ENCODE measurements at regions of chr14 and their contacts with region 1.

Region 1: GRCh38 chr14:50321009-50321660 is 9.0 kb downstream of the DMAC2L start:
- DNase-seq: peak; percentile 82
- ATAC-seq: peak; percentile 91
- H3K4me3 ChIP-seq: peak overlapping the region; percentile 47; the same call in 1 of the 2 replicates
- H3K27ac ChIP-seq: peak overlapping the region; percentile 77
- H3K4me1 ChIP-seq: peaks cover 27% of the 10 kb centered on the region
- H3K27me3 ChIP-seq: no peaks in the 10 kb centered on the region
- CTCF ChIP-seq: peak; percentile 86 to 97 (median 89)
- EP300 ChIP-seq: peak in 1 of 2 experiments; percentile 52; a peak in 1 of 4 replicates
- POLR2A ChIP-seq: no peak
- RAD21 ChIP-seq: peak; percentile 54

Region 2: DNA sequence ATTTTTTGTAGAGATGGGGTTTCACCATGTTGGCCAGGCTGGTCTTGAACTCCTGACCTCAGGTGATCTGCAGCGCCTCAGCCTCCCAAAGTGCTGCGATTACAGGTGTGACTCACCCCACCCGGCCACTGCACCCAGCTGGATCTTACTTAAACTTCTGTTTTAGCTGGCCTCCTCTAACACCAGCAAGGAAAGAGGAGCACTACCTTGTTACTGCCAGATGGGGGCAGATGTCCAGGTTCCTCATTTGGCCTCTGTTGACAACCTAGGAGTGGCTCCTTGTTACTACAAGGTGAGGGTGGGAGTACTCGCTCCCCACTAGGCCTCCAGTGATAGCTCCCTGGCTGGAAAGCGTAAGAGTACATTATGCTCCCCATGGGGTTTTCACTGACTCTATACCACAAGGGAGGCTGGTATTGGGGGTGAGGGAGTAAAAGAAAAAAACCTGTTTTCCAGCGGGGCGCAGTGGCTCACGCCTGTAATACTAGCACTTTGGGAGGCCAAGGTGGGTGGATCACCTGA is 441.4 kb before region 1 on chr14:
- CTCF ChIA-PET with region 1: no interaction called
- POLR2A ChIA-PET with region 1: no interaction called
- RAD21 ChIA-PET with region 1: no interaction called
- SMC1A ChIA-PET with region 1: no interaction called
- in situ Hi-C with region 1: no loop called
- intact Hi-C with region 1: no loop called
- DNase-seq: no peak
- ATAC-seq: peak; percentile 98
- H3K4me3 ChIP-seq: no peak overlapping the region
- H3K27ac ChIP-seq: no peak overlapping the region
- H3K4me1 ChIP-seq: no peaks in the 10 kb centered on the region
- H3K27me3 ChIP-seq: no peaks in the 10 kb centered on the region
- CTCF ChIP-seq: peak; percentile 50 to 74 (median 72)
- EP300 ChIP-seq: no peak
- POLR2A ChIP-seq: no peak
- RAD21 ChIP-seq: peak; percentile 72

Region 3: DNA sequence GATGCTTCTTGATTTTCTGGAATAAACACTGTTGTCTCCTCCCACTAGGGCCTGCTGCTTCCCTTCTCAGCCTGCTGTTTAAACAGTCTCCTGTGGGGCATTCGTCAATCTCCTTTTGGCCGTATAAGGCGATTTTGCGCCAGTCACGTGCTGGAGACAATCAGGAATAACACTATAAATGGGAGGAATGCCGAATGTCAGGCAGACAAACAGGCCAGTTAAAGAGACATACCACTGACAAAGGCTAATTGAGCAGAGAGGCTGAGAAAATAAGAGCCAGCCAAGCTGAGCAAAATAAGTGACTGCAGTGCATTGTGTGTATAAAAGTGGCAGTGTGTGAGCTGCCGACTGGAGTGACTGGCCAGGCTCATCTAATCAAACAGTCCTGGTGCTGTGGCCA is 14.3 kb after region 1 on chr14:
- CTCF ChIA-PET with region 1: interaction called, 30 read pairs
- POLR2A ChIA-PET with region 1: no interaction called
- RAD21 ChIA-PET with region 1: interaction called, 4 read pairs
- SMC1A ChIA-PET with region 1: interaction called, 8 read pairs
- in situ Hi-C with region 1: no loop called
- intact Hi-C with region 1: no loop called
- DNase-seq: no peak
- ATAC-seq: no peak; the same call in 2 of the 3 replicates
- H3K4me3 ChIP-seq: no peak overlapping the region
- H3K27ac ChIP-seq: no peak overlapping the region
- H3K4me1 ChIP-seq: peaks cover 5% of the 10 kb centered on the region
- H3K27me3 ChIP-seq: no peaks in the 10 kb centered on the region
- CTCF ChIP-seq: no peak
- EP300 ChIP-seq: no peak
- POLR2A ChIP-seq: no peak
- RAD21 ChIP-seq: no peak

Region 4: GRCh38 chr14:50354527-50354926 is 33.4 kb after region 1 on chr14:
- CTCF ChIA-PET with region 1: interaction called, 6 read pairs
- POLR2A ChIA-PET with region 1: no interaction called
- RAD21 ChIA-PET with region 1: no interaction called
- SMC1A ChIA-PET with region 1: interaction called, 10 read pairs
- in situ Hi-C with region 1: no loop called
- intact Hi-C with region 1: no loop called
- DNase-seq: no peak
- ATAC-seq: no peak
- H3K4me3 ChIP-seq: no peak overlapping the region
- H3K27ac ChIP-seq: no peak overlapping the region
- H3K4me1 ChIP-seq: no peaks in the 10 kb centered on the region
- H3K27me3 ChIP-seq: no peaks in the 10 kb centered on the region
- CTCF ChIP-seq: no peak
- EP300 ChIP-seq: no peak
- POLR2A ChIP-seq: no peak
- RAD21 ChIP-seq: no peak

Region 5: GRCh38 chr14:50396631-50397390 is 75.7 kb after region 1 on chr14 and contains the start of gene CDKL1:
- CTCF ChIA-PET with region 1: interaction called, 9 read pairs
- POLR2A ChIA-PET with region 1: no interaction called
- RAD21 ChIA-PET with region 1: interaction called, 8 read pairs
- SMC1A ChIA-PET with region 1: interaction called, 9 read pairs
- in situ Hi-C with region 1: no loop called
- intact Hi-C with region 1: loop called (anchors 2 kb)
- DNase-seq: no peak
- ATAC-seq: peak; percentile 83
- H3K4me3 ChIP-seq: peak within 1 kb of the TSS; percentile 66
- H3K27ac ChIP-seq: peak within 1 kb of the TSS; percentile 59
- H3K4me1 ChIP-seq: peaks cover 7% of the 10 kb centered on the region
- H3K27me3 ChIP-seq: no peaks in the 10 kb centered on the region
- CTCF ChIP-seq: no peak
- EP300 ChIP-seq: no peak
- POLR2A ChIP-seq: peak; percentile 80
- RAD21 ChIP-seq: no peak
- polyA plus RNA-seq, gene CDKL1: 10.0 to 17.2 TPM

Region 6: DNA sequence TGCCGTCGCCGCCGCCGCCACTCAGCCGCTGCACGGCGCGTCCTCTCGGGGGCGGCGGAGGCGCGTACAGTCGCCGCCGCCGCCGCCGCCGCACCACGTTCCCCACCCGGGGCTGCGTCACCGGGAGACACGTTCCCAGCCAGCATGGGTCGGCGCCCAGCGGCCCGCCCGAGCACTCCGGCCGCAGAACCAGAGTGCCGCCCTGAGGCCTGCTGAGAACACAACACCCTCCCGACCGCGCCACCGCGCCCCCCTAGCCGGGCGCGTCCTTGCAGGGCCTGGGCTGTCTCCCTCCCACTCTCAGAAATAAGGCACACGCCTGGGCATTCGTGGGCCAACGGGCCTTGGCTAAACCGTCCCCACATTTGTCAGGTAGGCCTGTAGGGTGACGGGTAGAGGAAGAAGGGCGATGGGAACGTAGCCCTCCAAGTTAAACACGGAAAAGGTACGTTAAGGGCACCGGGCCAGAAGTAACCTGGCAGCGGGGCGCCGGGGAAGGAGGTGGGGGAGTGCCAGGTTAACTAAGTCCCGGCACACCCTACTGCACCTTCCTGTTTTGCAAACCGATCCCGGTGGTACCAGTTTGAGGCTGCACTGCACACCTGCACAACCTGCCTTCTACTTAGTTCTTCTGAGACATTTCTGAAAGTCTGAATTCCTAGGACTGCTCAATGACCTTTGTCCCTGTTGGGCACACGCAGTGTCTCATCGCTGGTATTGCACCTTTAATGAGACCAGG is 211.5 kb after region 1 on chr14 and contains the start of gene MAP4K5:
- CTCF ChIA-PET with region 1: interaction called, 19 read pairs
- POLR2A ChIA-PET with region 1: interaction called, 4 read pairs
- RAD21 ChIA-PET with region 1: interaction called, 10 read pairs
- SMC1A ChIA-PET with region 1: interaction called, 17 read pairs
- in situ Hi-C with region 1: loop called (anchors 5 kb)
- intact Hi-C with region 1: loop called (anchors 1 kb)
- DNase-seq: peak; percentile 40
- ATAC-seq: peak; percentile 91
- H3K4me3 ChIP-seq: peak within 1 kb of the TSS; percentile 81
- H3K27ac ChIP-seq: peak within 1 kb of the TSS; percentile 75
- H3K4me1 ChIP-seq: peaks cover 10% of the 10 kb centered on the region
- H3K27me3 ChIP-seq: no peaks in the 10 kb centered on the region
- CTCF ChIP-seq: peak; percentile 89 to 99 (median 92); a peak in 5 of 6 replicates
- EP300 ChIP-seq: 0 out of 4 replicates have a peak, but pooled peaks of 1 of the 2 experiments have one; percentile 16
- POLR2A ChIP-seq: no peak; the same call in 1 of the 2 replicates
- RAD21 ChIP-seq: peak; percentile 96
- polyA plus RNA-seq, gene MAP4K5: 9.1 to 12.0 TPM